ENCODE measurements at regions of chr2 and their contacts with region 1.

Region 1: DNA sequence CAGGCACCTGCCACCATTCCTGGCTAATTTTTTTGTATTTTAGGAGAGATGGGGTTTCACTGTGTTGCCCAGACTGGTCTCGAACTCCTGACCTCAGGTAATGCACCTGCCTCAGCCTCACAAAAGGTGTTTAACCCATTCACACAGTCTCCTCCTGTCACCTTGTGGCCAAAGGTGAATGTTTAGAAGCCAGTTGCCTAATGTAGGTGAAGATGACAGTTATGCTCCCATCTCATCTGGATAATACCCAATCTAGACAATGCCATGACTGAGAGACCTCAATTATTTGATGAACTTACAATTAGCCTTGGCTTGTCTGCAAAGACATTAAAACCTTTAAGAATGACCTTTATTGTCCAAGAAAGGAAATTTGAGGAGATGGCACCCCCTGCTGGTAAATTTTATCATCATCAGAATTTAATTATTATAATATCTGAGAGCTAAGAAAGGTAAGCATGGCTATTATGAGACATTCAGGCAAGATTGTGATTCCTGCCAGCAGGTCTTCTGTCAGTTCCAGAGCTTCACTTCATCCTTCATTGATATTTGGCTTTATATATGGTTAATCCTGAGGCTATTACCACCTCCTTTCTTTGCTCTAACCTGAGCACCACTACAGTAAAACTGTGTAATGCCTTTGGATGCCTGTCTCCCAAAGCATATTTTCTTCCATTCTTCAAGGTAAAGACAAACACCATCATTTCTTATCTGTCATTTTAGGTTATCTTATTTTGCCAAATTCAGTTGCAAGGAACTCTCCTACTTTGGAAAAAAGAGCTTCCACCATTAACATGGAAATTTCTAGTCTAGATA is 117.6 kb downstream of the FAM124B start:
- DNase-seq: no peak
- ATAC-seq: peak; percentile 28 to 70 (median 67)
- H3K4me3 ChIP-seq: no peak overlapping the region
- H3K27ac ChIP-seq: no peak overlapping the region
- H3K4me1 ChIP-seq: no peaks in the 10 kb centered on the region
- H3K27me3 ChIP-seq: no peaks in the 10 kb centered on the region
- CTCF ChIP-seq: peak; percentile 64 to 90 (median 65)
- POLR2A ChIP-seq: no peak

Region 2: GRCh38 chr2:223970343-223971128 is 313.8 kb before region 1 on chr2:
- intact Hi-C with region 1: no loop called
- DNase-seq: no peak
- ATAC-seq: peak; percentile 75 to 88 (median 86)
- H3K4me3 ChIP-seq: no peak overlapping the region
- H3K27ac ChIP-seq: no peak overlapping the region
- H3K4me1 ChIP-seq: no peaks in the 10 kb centered on the region
- H3K27me3 ChIP-seq: no peaks in the 10 kb centered on the region
- CTCF ChIP-seq: peak; percentile 89 to 93 (median 92)
- POLR2A ChIP-seq: no peak

Region 3: GRCh38 chr2:223993621-223994232 is 290.6 kb before region 1 on chr2:
- intact Hi-C with region 1: loop called (anchors 5 kb)
- DNase-seq: peak in 2 of 3 donors; percentile 35 to 53
- ATAC-seq: peak; percentile 81 to 88 (median 84)
- H3K4me3 ChIP-seq: no peak overlapping the region
- H3K27ac ChIP-seq: no peak overlapping the region
- H3K4me1 ChIP-seq: no peaks in the 10 kb centered on the region
- H3K27me3 ChIP-seq: no peaks in the 10 kb centered on the region
- CTCF ChIP-seq: peak; percentile 80 to 84 (median 82)
- POLR2A ChIP-seq: no peak

Measured in right lobe of liver (tissue), 6 donors.